ENCODE measurements at regions of chr1 and their contacts with region 1.

Region 1: GRCh38 chr1:36162680-36163239 is 6.8 kb downstream of the MAP7D1 start:
- DNase-seq: no peak
- H3K4me3 ChIP-seq: no peak overlapping the region
- H3K27ac ChIP-seq: no peak overlapping the region
- H3K4me1 ChIP-seq: peaks cover 34% of the 10 kb centered on the region
- H3K27me3 ChIP-seq: no peaks in the 10 kb centered on the region
- CTCF ChIP-seq: no peak

Region 2: GRCh38 chr1:36116901-36117300 is 45.9 kb before region 1 on chr1:
- CTCF ChIA-PET with region 1: interaction called, 11 read pairs
- POLR2A ChIA-PET with region 1: no interaction called
- intact Hi-C with region 1: no loop called
- DNase-seq: no peak
- H3K4me3 ChIP-seq: no peak overlapping the region
- H3K27ac ChIP-seq: no peak overlapping the region
- H3K4me1 ChIP-seq: no peaks in the 10 kb centered on the region
- H3K27me3 ChIP-seq: no peaks in the 10 kb centered on the region
- CTCF ChIP-seq: no peak